Activated CD4-positive, alpha-beta T cell treated with anti-CD3 and anti-CD28 coated beads for 36 hours (primary cell): ENCODE measurements at regions of chr6 and their contacts with region 1.

Region 1: GRCh38 chr6:73739096-73739495 is 43.1 kb downstream of the CD109 start:
- DNase-seq: no peak
- ATAC-seq: peak; percentile 68
- H3K4me3 Mint-ChIP-seq: no peak overlapping the region
- H3K27ac Mint-ChIP-seq: no peak overlapping the region
- H3K4me1 Mint-ChIP-seq: no peaks in the 10 kb centered on the region
- H3K27me3 Mint-ChIP-seq: no peaks in the 10 kb centered on the region

Region 2: GRCh38 chr6:73675466-73676098 is 63.5 kb before region 1 on chr6:
- CTCF ChIA-PET with region 1: interaction called, 157 read pairs
- POLR2A ChIA-PET with region 1: no interaction called
- intact Hi-C with region 1: no loop called
- DNase-seq: peak; percentile 85
- ATAC-seq: peak; percentile 96
- H3K4me3 Mint-ChIP-seq: no peak overlapping the region
- H3K27ac Mint-ChIP-seq: no peak overlapping the region
- H3K4me1 Mint-ChIP-seq: peaks cover 1% of the 10 kb centered on the region
- H3K27me3 Mint-ChIP-seq: peaks cover 13% of the 10 kb centered on the region

Region 3: DNA sequence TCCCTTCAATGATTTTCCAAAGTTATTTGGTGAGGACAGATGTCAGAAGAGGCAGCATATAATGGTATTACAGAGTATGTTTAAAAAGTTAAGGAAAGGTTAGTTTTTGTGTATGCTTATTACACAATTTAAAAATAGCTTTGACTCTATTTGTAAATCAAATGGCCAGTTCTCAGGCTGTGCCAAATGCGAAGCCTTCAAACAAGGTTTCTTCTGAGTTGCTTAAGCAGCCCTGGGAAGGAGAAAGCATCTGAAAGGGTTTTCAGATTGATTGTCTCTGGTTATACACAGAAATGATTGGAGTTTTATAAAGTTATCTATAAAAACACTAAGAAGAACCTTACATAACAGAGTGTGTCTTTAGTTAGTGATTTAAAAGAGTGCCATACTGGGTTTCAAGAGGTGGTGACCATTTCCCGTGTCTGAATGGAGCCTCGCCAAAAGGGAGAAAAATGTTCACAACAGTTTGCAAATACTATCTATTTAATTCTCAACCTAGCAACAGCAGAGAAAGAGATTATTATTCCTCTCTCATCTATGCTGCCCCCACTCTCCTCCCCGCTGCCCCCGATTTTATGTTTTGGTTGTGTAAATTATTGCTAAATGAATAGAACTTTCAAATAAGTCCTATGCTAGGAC is 26.4 kb before region 1 on chr6:
- CTCF ChIA-PET with region 1: no interaction called
- POLR2A ChIA-PET with region 1: no interaction called
- intact Hi-C with region 1: no loop called
- DNase-seq: no peak
- ATAC-seq: no peak
- H3K4me3 Mint-ChIP-seq: no peak overlapping the region
- H3K27ac Mint-ChIP-seq: no peak overlapping the region
- H3K4me1 Mint-ChIP-seq: peaks cover 24% of the 10 kb centered on the region
- H3K27me3 Mint-ChIP-seq: no peaks in the 10 kb centered on the region

Region 4: DNA sequence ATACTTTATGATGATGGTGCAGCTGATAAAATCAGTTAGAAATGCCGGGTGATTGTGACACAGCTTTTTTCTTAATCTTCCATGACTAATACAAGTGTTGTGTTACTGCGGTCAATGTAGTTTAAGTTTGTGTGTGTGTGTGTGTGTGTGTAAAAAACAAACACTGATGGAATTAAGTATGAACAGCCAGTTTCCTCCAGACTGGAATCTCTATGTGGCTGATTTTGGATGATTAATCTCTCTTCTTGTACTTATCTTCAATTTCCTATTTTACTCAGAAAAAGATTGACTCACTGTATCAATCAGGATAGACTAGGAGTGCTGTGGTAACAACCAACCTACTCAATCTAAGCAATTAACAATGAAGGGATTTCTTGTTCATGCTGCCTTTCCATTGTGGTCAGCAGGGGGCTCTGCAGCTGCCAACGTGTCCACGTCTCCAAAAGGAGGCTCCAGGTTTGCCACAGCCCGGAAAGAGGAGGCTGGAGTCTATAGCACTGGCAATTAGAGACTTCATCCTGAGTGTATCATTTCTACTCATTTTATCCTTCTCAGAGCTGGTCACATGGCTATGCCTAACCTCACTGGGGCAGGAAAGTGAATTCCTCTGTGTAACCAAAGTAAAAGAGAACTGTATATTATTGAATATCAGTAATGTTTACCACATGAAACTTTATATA is 64.6 kb after region 1 on chr6:
- CTCF ChIA-PET with region 1: no interaction called
- POLR2A ChIA-PET with region 1: no interaction called
- intact Hi-C with region 1: no loop called
- DNase-seq: no peak
- ATAC-seq: no peak
- H3K4me3 Mint-ChIP-seq: no peak overlapping the region
- H3K27ac Mint-ChIP-seq: no peak overlapping the region
- H3K4me1 Mint-ChIP-seq: peaks cover 3% of the 10 kb centered on the region
- H3K27me3 Mint-ChIP-seq: no peaks in the 10 kb centered on the region

Region 5: DNA sequence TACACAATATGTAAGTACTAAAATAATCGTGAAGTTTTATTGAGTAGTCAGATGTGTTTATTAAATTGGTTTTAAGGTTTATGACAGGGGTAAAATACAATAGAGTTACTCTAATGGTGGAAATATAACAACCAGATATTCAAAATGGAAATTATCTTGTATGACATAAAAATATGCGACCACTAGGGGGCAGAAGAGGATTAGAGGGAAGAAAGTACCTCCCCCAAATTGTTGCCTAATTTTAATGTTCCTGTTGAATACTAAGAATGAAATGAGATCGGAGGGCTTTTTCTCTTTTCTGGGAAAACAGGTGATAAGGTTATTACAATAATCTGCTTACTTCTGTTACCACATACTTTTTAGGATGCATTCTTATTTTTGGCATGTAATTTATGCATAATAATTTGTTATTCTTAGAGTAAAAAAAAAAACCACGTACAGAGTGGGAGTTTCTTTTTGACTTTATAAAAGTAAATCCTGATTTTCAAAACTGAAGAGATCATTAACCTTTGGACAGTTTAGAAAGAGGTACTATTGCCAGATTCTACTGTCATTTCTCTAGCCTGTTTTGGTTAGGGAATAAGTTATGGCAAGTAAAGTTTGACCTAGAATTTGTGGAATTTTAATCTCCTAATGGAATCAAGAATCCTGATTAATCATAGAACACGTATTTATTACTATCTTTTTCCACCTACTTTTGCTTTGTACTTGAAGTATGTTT is 116.1 kb after region 1 on chr6:
- CTCF ChIA-PET with region 1: interaction called, 4 read pairs
- POLR2A ChIA-PET with region 1: no interaction called
- intact Hi-C with region 1: loop called (anchors 1 kb)
- DNase-seq: no peak
- ATAC-seq: peak; percentile 26
- H3K4me3 Mint-ChIP-seq: no peak overlapping the region
- H3K27ac Mint-ChIP-seq: no peak overlapping the region
- H3K4me1 Mint-ChIP-seq: no peaks in the 10 kb centered on the region
- H3K27me3 Mint-ChIP-seq: no peaks in the 10 kb centered on the region

Region 6: DNA sequence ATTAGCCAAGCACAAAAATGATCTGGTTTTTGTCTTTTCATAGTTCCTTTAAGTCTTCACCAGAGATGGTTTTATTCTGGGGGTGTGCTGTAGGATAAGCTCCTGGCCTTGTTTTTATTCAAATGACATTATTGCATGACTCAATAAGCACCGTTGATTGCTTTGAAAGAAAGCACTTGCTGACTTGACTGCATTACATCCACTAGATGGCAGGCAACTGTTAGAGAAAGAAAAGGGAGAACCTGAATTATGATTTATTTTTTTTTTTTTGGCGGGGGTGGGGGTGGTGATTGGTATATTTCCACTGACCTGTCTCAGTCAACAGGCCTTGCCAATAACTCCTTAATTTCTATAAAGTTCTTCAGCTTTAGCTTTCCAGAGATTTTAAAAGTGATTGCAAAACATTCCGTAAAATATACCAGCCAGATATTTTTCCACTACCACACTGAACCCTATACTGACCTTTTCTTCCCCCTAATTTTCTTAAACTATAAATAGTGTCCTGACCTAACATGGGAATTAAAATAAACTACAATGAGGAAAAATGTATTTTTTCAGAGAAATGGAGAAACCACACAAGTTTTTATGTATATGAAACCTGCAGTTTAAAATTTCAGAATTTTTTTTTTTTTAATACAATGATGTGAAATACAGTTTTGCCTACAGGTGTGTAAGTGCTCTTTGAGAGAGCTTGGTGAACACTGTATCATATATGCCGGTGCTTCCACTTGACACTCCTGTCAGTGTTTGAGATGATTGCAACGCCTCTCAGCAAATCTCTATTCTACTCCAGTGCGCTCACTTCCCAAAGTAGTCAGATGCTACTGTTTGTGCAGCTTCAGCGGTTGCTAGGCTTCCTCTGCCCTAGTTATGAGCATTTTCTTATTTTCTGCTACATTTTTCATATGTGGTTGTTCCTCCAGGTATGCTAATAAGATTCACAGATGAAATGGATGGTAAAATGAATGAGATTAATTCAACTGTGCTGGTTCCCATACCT is 231.2 kb after region 1 on chr6:
- CTCF ChIA-PET with region 1: no interaction called
- POLR2A ChIA-PET with region 1: no interaction called
- intact Hi-C with region 1: loop called in 1 of 2 experiments (anchors 5 kb)
- DNase-seq: peak; percentile 8
- ATAC-seq: peak; percentile 33
- H3K4me3 Mint-ChIP-seq: no peak overlapping the region
- H3K27ac Mint-ChIP-seq: no peak overlapping the region
- H3K4me1 Mint-ChIP-seq: no peaks in the 10 kb centered on the region
- H3K27me3 Mint-ChIP-seq: peaks cover 1% of the 10 kb centered on the region

Region 7: GRCh38 chr6:74091136-74091793 is 352.2 kb after region 1 on chr6:
- CTCF ChIA-PET with region 1: interaction called, 6 read pairs
- POLR2A ChIA-PET with region 1: no interaction called
- intact Hi-C with region 1: loop called in 1 of 2 experiments (anchors 1 kb)
- DNase-seq: no peak
- ATAC-seq: peak; percentile 39
- H3K4me3 Mint-ChIP-seq: no peak overlapping the region
- H3K27ac Mint-ChIP-seq: no peak overlapping the region
- H3K4me1 Mint-ChIP-seq: no peaks in the 10 kb centered on the region
- H3K27me3 Mint-ChIP-seq: peaks cover 2% of the 10 kb centered on the region